ENCODE measurements at regions of chr11 and their contacts with region 1.

Region 1: DNA sequence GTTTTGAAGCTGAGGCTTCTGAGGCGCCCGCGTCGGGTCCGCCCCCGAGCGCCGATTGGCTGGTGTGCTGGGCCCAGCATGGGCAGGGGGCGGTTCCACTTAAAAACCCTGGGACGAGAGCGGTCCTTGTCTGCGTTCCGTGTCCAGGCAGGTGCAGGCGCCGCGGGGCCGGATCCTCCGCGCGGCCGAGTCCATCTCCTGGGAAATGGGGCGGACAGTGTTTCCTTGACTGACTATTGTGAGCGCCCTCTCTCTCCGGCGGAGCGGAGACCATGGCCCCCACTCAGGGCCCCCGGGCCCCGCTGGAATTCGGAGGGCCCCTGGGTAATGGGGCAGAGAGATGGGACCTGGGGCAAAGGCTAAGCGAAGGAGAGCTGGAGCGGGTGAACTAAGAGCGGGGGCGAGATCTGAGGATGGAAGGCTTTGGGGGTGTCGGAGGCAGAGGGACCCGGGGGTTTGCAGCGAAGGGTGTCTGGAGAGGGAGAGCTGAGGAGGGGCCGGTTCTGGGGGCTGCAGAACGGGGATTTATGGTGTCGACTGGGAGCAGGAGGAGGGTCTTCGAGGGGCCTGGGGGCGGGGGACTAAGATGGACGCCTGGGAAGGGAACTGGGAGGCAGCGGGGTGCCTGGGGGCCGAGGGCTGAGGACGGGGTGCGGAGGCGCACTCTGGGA is at the start of gene TM7SF2:
- DNase-seq: peak; percentile 97 to 98
- H3K4me3 ChIP-seq: peak within 1 kb of the TSS; percentile 42
- H3K4me3 Mint-ChIP-seq: peak within 1 kb of the TSS; percentile 96
- H3K27ac Mint-ChIP-seq: peak within 1 kb of the TSS; percentile 92
- H3K4me1 ChIP-seq: peaks cover 26% of the 10 kb centered on the region
- H3K4me1 Mint-ChIP-seq: peaks cover 6% of the 10 kb centered on the region
- H3K27me3 ChIP-seq: no peaks in the 10 kb centered on the region
- H3K27me3 Mint-ChIP-seq: no peaks in the 10 kb centered on the region
- CTCF ChIP-seq: no peak
- total RNA-seq, gene TM7SF2: 62.9 and 73.8 TPM in 2 replicates

Region 2: DNA sequence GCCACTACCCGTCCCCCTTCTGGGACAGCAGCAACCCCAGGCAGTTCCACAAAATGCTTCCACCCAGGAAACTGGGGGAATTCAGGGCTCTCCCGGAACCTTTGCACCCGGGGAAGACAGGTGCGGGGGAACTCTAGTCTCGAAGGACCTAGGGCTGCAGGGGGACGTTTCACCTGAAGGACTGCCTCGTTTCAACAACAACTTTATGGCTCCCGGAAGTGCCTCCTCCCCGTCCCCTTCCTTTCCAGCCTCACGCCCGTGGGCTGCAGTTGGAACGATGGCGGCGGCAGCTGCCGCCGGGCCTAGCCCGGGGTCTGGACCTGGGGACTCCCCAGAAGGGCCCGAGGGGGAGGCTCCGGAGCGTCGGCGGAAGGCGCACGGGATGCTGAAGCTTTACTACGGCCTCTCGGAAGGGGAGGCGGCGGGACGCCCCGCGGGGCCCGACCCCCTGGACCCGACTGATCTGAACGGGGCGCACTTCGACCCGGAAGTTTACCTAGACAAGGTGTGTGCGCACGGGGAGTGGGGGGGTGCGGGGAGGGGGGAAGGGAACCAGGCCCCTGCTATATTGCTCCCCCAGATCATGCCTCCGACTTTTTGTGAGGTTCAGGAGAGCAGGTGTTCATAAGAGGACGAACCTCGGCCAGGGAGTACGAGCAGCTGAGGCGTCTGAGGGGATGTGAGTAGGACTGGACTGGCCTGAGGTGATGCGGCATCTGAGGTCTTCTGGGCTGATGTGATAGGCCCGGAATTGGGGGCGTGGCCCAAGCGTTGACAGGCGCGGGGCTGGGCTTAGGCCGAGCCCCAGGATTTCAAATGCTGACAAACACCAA is 15.7 kb before region 1 on chr11 and contains the start of gene VPS51:
- CTCF ChIA-PET with region 1: interaction called, 10 read pairs
- POLR2A ChIA-PET with region 1: interaction called, 6 read pairs
- intact Hi-C with region 1: loop called (anchors 1 kb)
- DNase-seq: peak; percentile 92 to 93
- H3K4me3 ChIP-seq: peak within 1 kb of the TSS; percentile 56
- H3K4me3 Mint-ChIP-seq: peak within 1 kb of the TSS; percentile 86
- H3K27ac Mint-ChIP-seq: peak within 1 kb of the TSS; percentile 90
- H3K4me1 ChIP-seq: peaks cover 10% of the 10 kb centered on the region
- H3K4me1 Mint-ChIP-seq: peaks cover 12% of the 10 kb centered on the region
- H3K27me3 ChIP-seq: no peaks in the 10 kb centered on the region
- H3K27me3 Mint-ChIP-seq: no peaks in the 10 kb centered on the region
- CTCF ChIP-seq: no peak
- total RNA-seq, gene VPS51: 147 and 158 TPM in 2 replicates

Region 3: DNA sequence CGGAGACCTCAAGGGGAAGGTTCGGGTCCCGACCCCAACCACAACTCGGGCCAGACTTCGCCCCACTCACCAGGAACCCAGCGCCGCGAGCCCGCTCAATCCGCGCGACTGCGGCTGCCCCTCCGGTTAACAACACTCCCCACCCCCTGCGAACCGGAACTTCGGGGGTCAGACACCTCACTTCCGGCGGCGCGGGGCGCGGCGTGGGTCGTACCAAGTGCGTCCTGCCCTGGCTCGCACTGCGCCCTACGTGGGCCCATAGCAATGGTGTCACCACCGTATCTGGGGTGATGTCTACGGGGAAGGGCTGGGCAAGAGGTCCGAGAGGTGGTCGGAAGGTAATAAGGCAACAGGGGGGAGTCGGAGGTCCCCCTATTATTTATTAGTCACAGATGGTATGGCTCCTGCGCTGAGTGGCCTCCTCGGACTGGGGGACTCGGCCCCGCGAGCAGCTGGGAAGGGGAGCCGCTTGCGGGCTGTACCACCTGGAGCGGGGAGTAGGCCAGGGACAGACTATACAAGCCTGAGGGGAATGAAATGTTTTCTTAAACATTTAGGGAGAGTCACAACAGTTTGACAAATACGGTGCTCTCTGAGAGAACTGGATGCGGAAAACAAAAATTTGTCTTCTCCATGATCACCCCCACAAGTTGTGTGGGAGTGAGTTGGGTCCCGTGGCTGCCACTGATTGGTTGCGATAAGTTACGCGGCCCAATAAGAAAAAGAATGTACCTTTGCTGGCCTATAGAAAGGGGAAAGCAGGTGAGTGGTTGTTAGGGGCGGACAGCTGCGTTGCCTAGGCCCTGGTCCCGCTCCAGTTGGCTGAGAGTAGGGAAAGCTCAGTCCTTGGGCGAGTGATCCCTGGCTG is 22.7 kb after region 1 on chr11 and contains the start of gene SYVN1:
- CTCF ChIA-PET with region 1: interaction called, 11 read pairs
- POLR2A ChIA-PET with region 1: interaction called, 4 read pairs
- intact Hi-C with region 1: no loop called
- DNase-seq: peak; percentile 94 to 96
- H3K4me3 ChIP-seq: peak within 1 kb of the TSS; percentile 99
- H3K4me3 Mint-ChIP-seq: peak within 1 kb of the TSS; percentile 93
- H3K27ac Mint-ChIP-seq: peak within 1 kb of the TSS; percentile 100
- H3K4me1 ChIP-seq: 0 out of 2 replicates have a peak, but pooled peaks cover 5% of the 10 kb centered on the region
- H3K4me1 Mint-ChIP-seq: peaks cover 8% of the 10 kb centered on the region
- H3K27me3 ChIP-seq: no peaks in the 10 kb centered on the region
- H3K27me3 Mint-ChIP-seq: no peaks in the 10 kb centered on the region
- CTCF ChIP-seq: no peak
- total RNA-seq, gene SYVN1: 50.9 and 56.5 TPM in 2 replicates

Region 4: DNA sequence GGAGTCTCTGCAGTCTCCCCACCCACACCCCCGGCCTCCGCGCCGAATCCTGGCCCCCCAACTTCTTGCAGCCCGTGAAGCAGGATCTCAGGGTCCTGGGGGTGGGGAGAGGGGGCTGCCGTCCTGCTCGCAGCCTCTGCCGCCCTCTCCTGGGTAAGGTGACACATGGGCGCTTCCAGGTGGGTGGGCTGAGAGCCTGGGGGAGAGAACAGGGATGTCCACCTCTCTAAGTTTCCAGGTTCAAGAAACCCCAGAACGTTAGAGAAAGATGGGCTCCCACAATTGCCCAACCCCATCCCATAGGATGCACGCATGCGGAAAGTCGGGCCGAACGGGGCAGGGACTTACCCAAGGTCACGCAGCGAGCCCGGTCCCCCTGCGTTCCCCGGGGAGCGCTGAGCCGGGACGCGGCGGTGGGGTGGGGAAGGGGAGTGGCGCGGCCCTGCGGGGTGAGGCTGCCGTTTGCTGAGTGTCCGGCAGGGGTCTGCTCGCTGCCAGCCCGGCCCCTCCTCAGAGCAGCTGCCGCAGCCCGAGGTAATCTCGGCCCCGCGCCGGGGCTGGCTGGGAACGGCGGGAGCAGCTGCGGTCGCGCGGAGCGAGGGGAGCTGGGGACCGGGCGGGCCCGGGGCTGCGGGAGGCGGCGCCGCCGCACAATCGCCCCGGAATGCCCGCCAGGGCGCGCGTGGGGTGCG is 69.1 kb after region 1 on chr11:
- CTCF ChIA-PET with region 1: interaction called, 8 read pairs
- POLR2A ChIA-PET with region 1: interaction called, 5 read pairs
- intact Hi-C with region 1: loop called (anchors 2 kb)
- DNase-seq: peak; percentile 86 to 93
- H3K4me3 ChIP-seq: peak overlapping the region; percentile 84
- H3K4me3 Mint-ChIP-seq: peak overlapping the region; percentile 85
- H3K27ac Mint-ChIP-seq: peak overlapping the region; percentile 90
- H3K4me1 ChIP-seq: peaks cover 13% of the 10 kb centered on the region
- H3K4me1 Mint-ChIP-seq: no peaks in the 10 kb centered on the region
- H3K27me3 ChIP-seq: no peaks in the 10 kb centered on the region
- H3K27me3 Mint-ChIP-seq: no peaks in the 10 kb centered on the region
- CTCF ChIP-seq: peak; percentile 63 to 83

Region 5: DNA sequence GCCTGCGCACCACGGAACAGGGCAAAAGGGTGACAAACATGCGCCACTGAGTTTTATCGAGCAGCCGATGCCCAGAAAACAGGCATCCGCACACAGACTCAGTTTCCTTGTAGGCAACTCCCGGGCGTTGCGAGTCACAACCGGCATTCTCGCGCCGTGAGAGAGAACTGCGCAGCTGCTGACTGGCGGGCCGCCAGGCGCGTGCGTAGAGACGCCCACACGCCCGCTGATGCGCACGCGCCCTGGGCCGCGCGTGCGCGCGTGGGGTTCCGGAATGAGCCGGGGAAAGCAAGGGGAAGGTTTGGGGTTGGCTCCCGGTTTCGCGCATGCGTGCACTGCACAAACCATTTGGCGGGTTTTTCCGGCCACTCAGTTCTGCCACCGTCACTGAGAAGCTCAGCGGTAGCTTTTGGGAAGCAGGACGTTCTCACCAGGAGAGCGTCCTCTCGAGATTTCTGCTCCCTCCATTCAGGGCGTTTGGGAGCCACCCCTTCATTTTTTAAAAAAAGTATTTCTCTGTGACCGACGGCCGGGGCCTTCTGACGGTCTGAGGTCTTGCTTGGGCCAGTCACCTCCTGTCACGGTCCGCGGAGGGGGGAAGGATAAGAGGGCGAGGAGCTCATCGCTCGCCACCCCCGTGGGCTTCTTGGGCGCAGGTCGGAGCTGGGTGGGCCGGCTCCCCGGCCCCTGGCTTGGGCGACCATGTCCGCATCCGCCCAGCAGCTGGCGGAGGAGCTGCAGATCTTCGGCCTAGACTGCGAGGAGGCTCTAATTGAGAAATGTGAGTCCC is 149.9 kb after region 1 on chr11 and contains the start of gene POLA2:
- CTCF ChIA-PET with region 1: no interaction called
- POLR2A ChIA-PET with region 1: no interaction called
- intact Hi-C with region 1: no loop called
- DNase-seq: peak; percentile 96
- H3K4me3 ChIP-seq: peak within 1 kb of the TSS; percentile 71
- H3K4me3 Mint-ChIP-seq: peak within 1 kb of the TSS; percentile 81
- H3K27ac Mint-ChIP-seq: peak within 1 kb of the TSS; percentile 70
- H3K4me1 ChIP-seq: no peaks in the 10 kb centered on the region
- H3K4me1 Mint-ChIP-seq: peaks cover 22% of the 10 kb centered on the region
- H3K27me3 ChIP-seq: no peaks in the 10 kb centered on the region
- H3K27me3 Mint-ChIP-seq: no peaks in the 10 kb centered on the region
- CTCF ChIP-seq: no peak
- total RNA-seq, gene POLA2: 23.2 and 25.3 TPM in 2 replicates

Measured in Caco-2 (cell line).